ENCODE measurements at regions of chr3 and their contacts with region 1.

Region 1: GRCh38 chr3:79521238-79521848 is 246.5 kb downstream of the ROBO1 start:
- ATAC-seq: peak; percentile 33 to 79 (median 56)
- H3K4me3 ChIP-seq: no peak overlapping the region
- H3K27ac ChIP-seq: no peak overlapping the region
- H3K4me1 ChIP-seq: peaks cover 0 to 7% of the 10 kb centered on the region in 2 donors

Region 2: DNA sequence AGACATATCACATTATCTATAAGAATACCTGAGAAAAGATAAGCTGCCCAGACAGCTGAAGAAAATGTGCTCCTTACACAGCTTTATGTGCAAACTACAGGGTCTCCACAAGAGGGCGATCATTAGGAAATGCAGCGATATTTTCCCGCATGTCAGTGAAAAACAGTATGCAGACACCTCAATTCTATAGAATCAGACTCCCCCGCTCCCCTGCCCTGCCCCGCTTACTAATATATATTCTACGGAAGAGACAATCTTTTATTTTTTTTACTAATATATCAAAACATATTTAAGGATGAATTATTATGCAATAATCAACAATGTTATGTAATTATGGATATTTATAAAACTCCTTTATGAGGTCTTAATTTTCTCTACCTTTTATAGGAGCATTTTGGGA is 434.8 kb before region 1 on chr3:
- in situ Hi-C with region 1: loop called in 1 of 9 experiments (anchors 25 kb)
- ATAC-seq: peak; percentile 31 to 72 (median 56)
- H3K4me3 ChIP-seq: no peak overlapping the region
- H3K27ac ChIP-seq: no peak overlapping the region
- H3K4me1 ChIP-seq: peaks cover 0 to 4% of the 10 kb centered on the region in 2 donors

Region 3: GRCh38 chr3:80688814-80689213 is 1167.5 kb after region 1 on chr3:
- in situ Hi-C with region 1: loop called in 5 of 9 experiments (anchors 10 to 25 kb)
- ATAC-seq: peak in 1 of 8 experiments; percentile 43
- H3K4me3 ChIP-seq: no peak overlapping the region
- H3K27ac ChIP-seq: no peak overlapping the region
- H3K4me1 ChIP-seq: no peaks in the 10 kb centered on the region

Region 4: DNA sequence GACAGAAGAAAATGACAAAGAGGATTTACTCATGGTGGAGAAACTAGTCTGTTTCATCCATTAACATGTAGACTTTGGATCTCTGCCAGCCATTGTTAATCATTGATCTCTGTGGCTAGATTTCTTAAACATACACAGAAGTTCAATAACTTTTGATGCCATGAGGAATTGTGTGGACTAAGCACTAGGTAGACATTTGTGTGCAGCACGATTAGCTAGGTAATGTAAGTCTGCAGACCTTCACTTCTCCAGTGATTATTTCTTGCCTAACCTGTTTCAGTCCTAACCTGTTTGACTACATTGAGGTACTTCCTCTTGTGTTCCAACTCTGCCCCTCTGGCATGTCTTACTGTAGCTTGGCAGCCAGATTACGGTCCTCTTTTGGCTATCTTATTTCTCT is 1174.9 kb after region 1 on chr3:
- in situ Hi-C with region 1: loop called in 5 of 9 experiments (anchors 10 to 25 kb)
- ATAC-seq: no peak
- H3K4me3 ChIP-seq: no peak overlapping the region
- H3K27ac ChIP-seq: no peak overlapping the region
- H3K4me1 ChIP-seq: no peaks in the 10 kb centered on the region

Measured in motor neuron (in vitro differentiated cells).